ENCODE measurements at regions of chr6 and their contacts with region 1.

Region 1: GRCh38 chr6:41306187-41306854 is 19.8 kb upstream of the TREM1 start:
- DNase-seq: peak; percentile 76
- ATAC-seq: peak; percentile 39
- H3K4me3 ChIP-seq: no peak overlapping the region
- H3K4me3 Mint-ChIP-seq: no peak overlapping the region
- H3K27ac ChIP-seq: no peak overlapping the region
- H3K27ac Mint-ChIP-seq: no peak overlapping the region
- H3K4me1 ChIP-seq: peaks cover 21 to 30% of the 10 kb centered on the region in 2 donors
- H3K4me1 Mint-ChIP-seq: peaks cover 36% of the 10 kb centered on the region
- H3K27me3 ChIP-seq: no peaks in the 10 kb centered on the region
- H3K27me3 Mint-ChIP-seq: no peaks in the 10 kb centered on the region
- CTCF ChIP-seq: peak; percentile 87

Region 2: GRCh38 chr6:41092421-41093140 is 213.7 kb before region 1 on chr6:
- CTCF ChIA-PET with region 1: interaction called, 16 read pairs
- POLR2A ChIA-PET with region 1: no interaction called
- intact Hi-C with region 1: no loop called
- DNase-seq: peak; percentile 27
- ATAC-seq: no peak
- H3K4me3 ChIP-seq: no peak overlapping the region
- H3K4me3 Mint-ChIP-seq: no peak overlapping the region
- H3K27ac ChIP-seq: no peak overlapping the region
- H3K27ac Mint-ChIP-seq: no peak overlapping the region
- H3K4me1 ChIP-seq: no peaks in the 10 kb centered on the region
- H3K4me1 Mint-ChIP-seq: no peaks in the 10 kb centered on the region
- H3K27me3 ChIP-seq: no peaks in the 10 kb centered on the region
- H3K27me3 Mint-ChIP-seq: no peaks in the 10 kb centered on the region
- CTCF ChIP-seq: peak; percentile 55

Region 3: DNA sequence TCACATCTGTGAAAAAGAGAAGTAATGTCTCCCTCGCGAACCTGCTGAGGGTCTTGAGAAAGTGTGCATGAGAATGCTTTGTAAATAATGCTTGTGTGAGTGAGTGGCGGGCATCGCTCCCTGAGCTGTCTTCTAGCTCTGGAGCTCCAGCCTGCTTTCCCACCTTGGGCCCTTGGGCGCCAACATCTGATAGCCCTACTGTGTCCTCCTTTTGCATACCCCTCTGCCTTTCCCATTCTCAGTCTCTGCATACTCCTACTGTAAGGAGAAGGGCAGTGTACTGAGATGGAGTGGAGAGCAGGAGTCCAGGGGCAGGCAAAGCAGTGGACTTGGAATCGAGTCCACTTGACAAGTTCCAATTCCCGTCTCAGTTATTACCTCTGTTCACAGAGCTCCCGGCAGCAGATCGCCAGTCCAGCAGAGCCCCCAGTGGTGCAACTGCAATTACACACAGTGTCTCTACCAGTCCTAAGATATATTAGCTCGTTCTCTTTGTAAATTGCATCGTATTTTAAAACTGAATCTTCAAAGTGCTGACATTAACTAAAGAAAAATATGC is 28.2 kb after region 1 on chr6:
- CTCF ChIA-PET with region 1: interaction called, 17 read pairs
- POLR2A ChIA-PET with region 1: no interaction called
- intact Hi-C with region 1: no loop called
- DNase-seq: no peak
- ATAC-seq: no peak
- H3K4me3 ChIP-seq: peak overlapping the region in 1 of 5 experiments; percentile 4
- H3K4me3 Mint-ChIP-seq: peak overlapping the region; percentile 66
- H3K27ac ChIP-seq: peak overlapping the region; percentile 70 to 87
- H3K27ac Mint-ChIP-seq: peak overlapping the region; percentile 93
- H3K4me1 ChIP-seq: peaks cover 36 to 44% of the 10 kb centered on the region in 2 donors
- H3K4me1 Mint-ChIP-seq: peaks cover 45% of the 10 kb centered on the region
- H3K27me3 ChIP-seq: no peaks in the 10 kb centered on the region
- H3K27me3 Mint-ChIP-seq: no peaks in the 10 kb centered on the region
- CTCF ChIP-seq: no peak

Region 4: DNA sequence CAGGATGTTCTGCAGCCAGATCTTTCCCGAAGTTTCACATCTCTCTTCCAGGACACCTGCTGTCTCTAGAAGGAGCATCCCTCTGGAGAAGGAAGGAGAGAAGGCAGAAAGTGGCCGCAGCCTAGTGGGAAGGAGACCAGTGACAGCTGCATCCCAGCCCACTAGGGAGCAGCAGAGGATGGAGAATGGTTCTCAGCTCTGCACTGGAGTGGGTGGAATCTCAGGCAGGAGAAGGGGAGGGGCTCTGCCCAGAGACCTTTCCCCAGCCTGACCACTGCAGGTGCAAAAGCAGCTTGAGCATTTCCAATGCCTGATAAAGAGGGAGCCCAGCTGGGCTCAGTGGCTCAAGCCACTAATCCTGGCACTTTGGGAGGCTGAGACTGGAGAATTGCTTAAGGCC is 61.4 kb after region 1 on chr6:
- CTCF ChIA-PET with region 1: interaction called, 11 read pairs
- POLR2A ChIA-PET with region 1: no interaction called
- intact Hi-C with region 1: loop called (anchors 2 kb)
- DNase-seq: no peak
- ATAC-seq: no peak
- H3K4me3 ChIP-seq: no peak overlapping the region
- H3K4me3 Mint-ChIP-seq: no peak overlapping the region
- H3K27ac ChIP-seq: no peak overlapping the region
- H3K27ac Mint-ChIP-seq: no peak overlapping the region
- H3K4me1 ChIP-seq: peaks cover 16 to 23% of the 10 kb centered on the region in 2 donors
- H3K4me1 Mint-ChIP-seq: peaks cover 22% of the 10 kb centered on the region
- H3K27me3 ChIP-seq: peaks cover 2 to 53% (median 23%) of the 10 kb centered on the region in 4 experiments
- H3K27me3 Mint-ChIP-seq: peaks cover 55% of the 10 kb centered on the region
- CTCF ChIP-seq: no peak